Activated T-helper 2 cell treated with anti-CD3 and anti-CD28 coated beads, Interferon-gamma antibody, Interleukin-2, Interleukin-4, amounts not matched to agents 10 μg/mL and 5 μg/mL and 100 μg/mL, durations not matched to agents 14 hours and 24 hours and 36 hours (primary cell): ENCODE measurements at regions of chr4 and their contacts with region 1.

Region 1: GRCh38 chr4:158253350-158253980 is 43.2 kb downstream of the TMEM144 start:
- DNase-seq: peak; percentile 11
- H3K4me3 Mint-ChIP-seq: no peak overlapping the region
- H3K27ac Mint-ChIP-seq: no peak overlapping the region
- H3K4me1 Mint-ChIP-seq: peaks cover 4% of the 10 kb centered on the region
- H3K27me3 Mint-ChIP-seq: peaks cover 1% of the 10 kb centered on the region

Region 2: DNA sequence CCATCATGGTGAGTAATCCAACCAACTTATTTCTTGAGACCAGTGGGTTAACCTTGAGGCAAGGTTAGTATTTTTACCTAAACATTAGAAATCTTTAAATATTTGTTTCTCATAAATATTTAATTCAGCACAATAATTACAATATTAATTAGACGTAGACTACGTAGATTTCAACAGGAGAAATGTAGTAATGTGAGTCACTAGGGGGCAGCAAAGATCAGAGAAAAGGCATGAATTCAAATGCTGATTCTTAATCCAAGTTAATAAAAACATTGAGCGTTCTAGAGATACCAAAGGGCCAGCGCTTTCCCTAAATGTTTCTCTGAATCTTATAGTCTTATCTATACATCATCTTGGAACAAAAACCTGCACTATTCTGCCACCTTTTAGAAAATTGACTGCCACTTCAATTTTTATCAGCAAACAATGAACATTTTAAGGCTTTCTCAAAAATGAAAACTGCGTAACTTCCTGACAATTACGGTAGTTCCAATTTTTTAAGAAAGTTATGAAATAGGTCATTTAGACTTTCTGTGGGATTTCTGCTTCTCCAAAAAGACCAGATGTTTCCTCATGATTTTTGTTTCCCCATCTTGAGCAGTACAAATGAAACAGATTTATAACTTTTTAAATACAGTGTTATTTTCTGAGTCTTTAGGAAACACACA is 261.3 kb before region 1 on chr4:
- intact Hi-C with region 1: loop called (anchors 2 kb)
- DNase-seq: no peak
- H3K4me3 Mint-ChIP-seq: no peak overlapping the region
- H3K27ac Mint-ChIP-seq: no peak overlapping the region
- H3K4me1 Mint-ChIP-seq: no peaks in the 10 kb centered on the region
- H3K27me3 Mint-ChIP-seq: no peaks in the 10 kb centered on the region

Region 3: GRCh38 chr4:158193171-158193749 is 60.2 kb before region 1 on chr4:
- intact Hi-C with region 1: loop called (anchors 2 kb)
- DNase-seq: no peak
- H3K4me3 Mint-ChIP-seq: no peak overlapping the region
- H3K27ac Mint-ChIP-seq: no peak overlapping the region
- H3K4me1 Mint-ChIP-seq: peaks cover 1% of the 10 kb centered on the region
- H3K27me3 Mint-ChIP-seq: peaks cover 3% of the 10 kb centered on the region